Activated CD8-positive, alpha-beta T cell treated with anti-CD3 and anti-CD28 coated beads, Interleukin-2, amount 10 ng/mL, durations not matched to agents 7 days and 5 days (primary cell): ENCODE measurements at regions of chr6 and their contacts with region 1.

Region 1: DNA sequence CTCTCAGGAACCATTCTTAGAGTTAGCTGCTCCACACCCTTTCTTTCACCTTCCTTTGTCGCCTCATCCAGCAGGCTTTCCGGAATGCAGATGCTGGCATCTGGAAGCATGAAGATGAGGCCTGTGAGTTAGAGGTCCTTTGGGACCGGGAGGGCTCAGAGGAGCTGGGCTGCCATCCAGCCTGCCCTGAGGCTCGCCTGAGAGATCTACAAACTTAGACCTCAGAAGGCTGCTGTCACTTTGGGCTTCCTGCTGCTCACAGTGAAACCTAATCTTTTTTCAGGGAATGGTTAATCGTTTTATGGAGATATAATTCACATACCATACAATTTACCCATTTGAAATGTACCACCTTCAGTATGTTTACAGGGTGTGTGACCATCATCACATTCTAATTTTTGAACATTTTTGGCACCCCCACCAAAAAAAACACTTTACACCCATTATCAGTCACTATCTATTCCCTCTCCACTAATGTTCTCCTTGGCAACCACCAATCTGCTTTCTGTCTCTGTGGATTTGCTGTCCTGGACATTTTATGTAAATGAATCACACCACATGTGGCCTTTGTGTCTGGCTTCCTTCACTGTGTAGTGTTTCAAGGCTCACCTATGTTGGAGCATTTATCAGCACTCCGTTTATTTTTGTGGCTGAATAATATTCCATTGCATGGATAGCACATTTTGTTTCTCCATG is 20.0 kb upstream of the MPC1 start:
- DNase-seq: no peak
- ATAC-seq: no peak
- H3K4me3 Mint-ChIP-seq: no peak overlapping the region
- H3K27ac Mint-ChIP-seq: no peak overlapping the region
- H3K4me1 Mint-ChIP-seq: peaks cover 2% of the 10 kb centered on the region
- H3K27me3 Mint-ChIP-seq: peaks cover 11% of the 10 kb centered on the region

Region 2: GRCh38 chr6:165937564-165938358 is 465.0 kb before region 1 on chr6:
- CTCF ChIA-PET with region 1: no interaction called
- POLR2A ChIA-PET with region 1: no interaction called
- DNase-seq: no peak
- ATAC-seq: no peak
- H3K4me3 Mint-ChIP-seq: no peak overlapping the region
- H3K27ac Mint-ChIP-seq: no peak overlapping the region
- H3K4me1 Mint-ChIP-seq: no peaks in the 10 kb centered on the region
- H3K27me3 Mint-ChIP-seq: peaks cover 4% of the 10 kb centered on the region

Region 3: DNA sequence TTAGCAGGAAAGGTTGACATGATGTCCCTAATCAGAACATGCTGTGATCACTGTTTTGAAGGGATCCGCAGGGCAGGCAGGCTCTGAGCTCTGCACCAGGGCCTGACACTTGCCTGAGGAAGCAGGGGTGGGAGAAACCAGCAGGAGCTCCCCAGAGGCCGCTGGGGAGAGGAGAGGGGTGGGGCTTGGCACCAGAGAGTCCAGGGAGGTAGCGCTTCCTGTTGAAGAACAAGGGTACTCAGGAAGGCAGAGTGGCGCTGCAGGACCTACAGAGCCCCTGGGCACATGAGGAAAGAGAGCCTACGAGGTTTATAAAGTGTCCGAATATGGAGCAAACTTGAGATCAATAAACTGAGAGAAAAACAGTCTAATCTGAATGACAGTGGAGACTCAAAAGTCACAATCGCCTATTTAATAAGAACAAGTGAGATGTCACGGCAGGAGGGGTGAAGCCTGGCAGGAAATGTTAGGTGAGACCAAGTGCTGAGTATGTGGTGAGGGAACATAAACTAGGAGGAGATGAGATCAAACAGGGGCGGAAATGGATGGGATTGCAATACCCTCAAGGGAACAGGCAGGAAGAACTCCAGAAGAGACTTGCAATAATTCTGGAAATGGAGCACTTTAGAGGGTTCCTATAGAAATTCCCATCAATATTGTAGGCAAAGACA is 229.3 kb before region 1 on chr6:
- CTCF ChIA-PET with region 1: no interaction called
- POLR2A ChIA-PET with region 1: no interaction called
- DNase-seq: no peak
- ATAC-seq: peak; percentile 51
- H3K4me3 Mint-ChIP-seq: no peak overlapping the region
- H3K27ac Mint-ChIP-seq: no peak overlapping the region
- H3K4me1 Mint-ChIP-seq: peaks cover 7% of the 10 kb centered on the region
- H3K27me3 Mint-ChIP-seq: peaks cover 23% of the 10 kb centered on the region

Region 4: DNA sequence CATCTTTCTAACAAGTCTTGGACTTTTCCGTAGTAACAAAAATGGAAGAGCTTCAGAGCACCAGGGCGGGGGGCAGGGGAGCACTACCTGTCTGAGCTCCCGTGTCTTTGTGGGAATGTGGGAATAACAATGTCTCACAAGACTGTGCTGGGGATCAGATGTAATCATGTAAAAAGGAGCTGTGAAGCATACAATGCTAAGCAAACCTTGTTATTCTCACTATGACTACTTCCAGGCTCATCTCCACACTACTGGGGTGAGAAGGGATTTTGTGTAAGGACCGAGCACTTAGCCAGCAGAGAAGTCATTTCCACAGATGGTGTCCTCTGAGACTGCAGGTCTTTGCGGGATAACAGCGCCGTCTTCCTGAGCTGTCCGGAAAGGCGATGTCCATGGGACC is 121.6 kb before region 1 on chr6:
- CTCF ChIA-PET with region 1: interaction called, 61 read pairs
- POLR2A ChIA-PET with region 1: no interaction called
- DNase-seq: no peak
- ATAC-seq: no peak
- H3K4me3 Mint-ChIP-seq: no peak overlapping the region
- H3K27ac Mint-ChIP-seq: no peak overlapping the region
- H3K4me1 Mint-ChIP-seq: peaks cover 1% of the 10 kb centered on the region
- H3K27me3 Mint-ChIP-seq: peaks cover 17% of the 10 kb centered on the region

Region 5: DNA sequence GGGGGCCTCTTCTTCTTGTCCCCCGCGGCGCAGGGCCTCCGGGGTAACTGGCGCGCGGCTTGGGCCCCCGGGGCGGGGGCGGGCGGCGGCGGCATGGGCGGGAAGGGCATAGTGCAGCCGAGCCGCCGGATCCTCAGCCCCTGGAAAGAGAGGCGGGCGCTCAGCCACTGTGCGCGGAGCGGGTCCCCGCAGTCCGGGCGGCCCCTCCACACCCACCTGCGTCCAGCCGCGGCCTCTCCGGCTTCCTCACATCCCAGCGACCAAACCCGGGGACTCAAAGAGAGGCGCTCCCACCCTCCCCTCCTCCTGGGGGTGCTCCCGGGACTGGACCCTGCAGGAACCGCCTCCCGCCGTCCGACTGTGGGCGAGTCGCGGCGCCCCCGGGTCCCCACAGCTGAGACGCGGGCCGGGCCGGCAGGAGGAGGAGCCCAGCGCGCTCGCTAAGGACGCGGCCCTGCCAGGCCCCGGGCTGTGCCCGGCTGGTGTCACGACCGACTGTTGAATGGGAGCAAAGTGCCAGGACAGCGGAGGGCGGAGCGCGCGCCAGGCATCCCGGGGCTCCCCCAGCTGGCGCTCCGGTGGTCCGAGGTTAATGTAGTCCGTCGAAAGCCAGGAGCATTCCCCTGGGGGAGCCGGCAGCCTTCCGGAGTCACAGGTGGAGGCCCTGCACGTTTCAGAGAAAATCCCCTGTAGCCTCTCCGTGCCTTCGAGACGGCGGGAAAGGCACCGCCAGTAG is 94.5 kb before region 1 on chr6 and contains the start of gene PRR18:
- CTCF ChIA-PET with region 1: interaction called, 49 read pairs
- POLR2A ChIA-PET with region 1: no interaction called
- DNase-seq: no peak
- ATAC-seq: peak; percentile 47
- H3K4me3 Mint-ChIP-seq: no peak within 1 kb of the TSS
- H3K27ac Mint-ChIP-seq: no peak within 1 kb of the TSS
- H3K4me1 Mint-ChIP-seq: peaks cover 1% of the 10 kb centered on the region
- H3K27me3 Mint-ChIP-seq: peaks cover 56% of the 10 kb centered on the region
- total RNA-seq, gene PRR18: not detected

Region 6: GRCh38 chr6:166325383-166326042 is 77.2 kb before region 1 on chr6:
- CTCF ChIA-PET with region 1: interaction called, 12 read pairs
- POLR2A ChIA-PET with region 1: no interaction called
- DNase-seq: no peak
- ATAC-seq: no peak
- H3K4me3 Mint-ChIP-seq: no peak overlapping the region
- H3K27ac Mint-ChIP-seq: no peak overlapping the region
- H3K4me1 Mint-ChIP-seq: no peaks in the 10 kb centered on the region
- H3K27me3 Mint-ChIP-seq: no peaks in the 10 kb centered on the region

Region 7: DNA sequence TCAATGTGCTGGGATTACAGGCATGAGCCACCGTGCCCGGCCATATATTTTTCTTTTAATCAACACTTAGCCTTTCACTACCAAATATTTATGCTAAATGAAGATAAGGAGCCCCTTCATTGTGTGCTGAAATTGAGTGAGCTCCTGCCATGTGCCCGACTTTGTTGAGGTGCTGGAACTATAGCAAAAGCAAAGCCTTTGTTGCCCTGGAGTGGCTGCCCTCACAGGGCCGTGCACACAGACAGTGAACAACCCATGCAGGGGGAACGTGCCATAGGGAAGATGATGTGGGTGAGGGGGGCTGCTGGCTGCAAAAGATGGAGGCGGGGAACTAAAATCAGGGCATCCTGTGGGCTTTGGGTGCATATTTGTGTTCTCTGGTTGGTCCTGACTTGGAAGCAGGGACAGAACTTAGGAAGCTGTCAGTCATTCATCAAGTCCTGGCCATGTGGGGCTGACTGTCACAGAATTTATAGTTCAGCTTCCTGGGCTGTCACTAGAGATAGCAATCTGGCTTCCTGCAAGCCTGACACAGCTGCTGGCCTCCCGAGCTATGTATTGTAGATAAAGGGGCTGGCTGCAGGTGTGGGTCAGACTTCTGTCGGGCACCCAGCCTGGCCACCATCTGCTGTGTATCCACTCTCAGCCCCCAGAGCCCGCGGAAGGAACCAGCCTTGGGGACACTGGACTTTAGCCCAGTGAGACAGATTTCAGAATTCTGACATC is 36.8 kb after region 1 on chr6:
- CTCF ChIA-PET with region 1: interaction called, 10 read pairs
- POLR2A ChIA-PET with region 1: no interaction called
- DNase-seq: no peak
- ATAC-seq: peak; percentile 48
- H3K4me3 Mint-ChIP-seq: no peak overlapping the region
- H3K27ac Mint-ChIP-seq: no peak overlapping the region
- H3K4me1 Mint-ChIP-seq: peaks cover 17% of the 10 kb centered on the region
- H3K27me3 Mint-ChIP-seq: peaks cover 19% of the 10 kb centered on the region